SK-N-SH (cell line): ENCODE measurements at regions of chr14 and their contacts with region 1.

Region 1: GRCh38 chr14:66403183-66403582 is 83.0 kb upstream of the CCDC196 start:
- DNase-seq: no peak
- H3K4me3 ChIP-seq: no peak overlapping the region
- H3K27ac ChIP-seq: no peak overlapping the region
- H3K4me1 ChIP-seq: no peaks in the 10 kb centered on the region
- H3K27me3 ChIP-seq: no peaks in the 10 kb centered on the region
- CTCF ChIP-seq: peak; percentile 44
- EP300 ChIP-seq: no peak
- RAD21 ChIP-seq: peak; percentile 47

Region 2: GRCh38 chr14:66293533-66294105 is 109.6 kb before region 1 on chr14:
- CTCF ChIA-PET with region 1: no interaction called
- POLR2A ChIA-PET with region 1: no interaction called
- DNase-seq: no peak
- H3K4me3 ChIP-seq: no peak overlapping the region
- H3K27ac ChIP-seq: no peak overlapping the region
- H3K4me1 ChIP-seq: no peaks in the 10 kb centered on the region
- H3K27me3 ChIP-seq: no peaks in the 10 kb centered on the region
- CTCF ChIP-seq: no peak
- EP300 ChIP-seq: no peak
- RAD21 ChIP-seq: no peak

Region 3: DNA sequence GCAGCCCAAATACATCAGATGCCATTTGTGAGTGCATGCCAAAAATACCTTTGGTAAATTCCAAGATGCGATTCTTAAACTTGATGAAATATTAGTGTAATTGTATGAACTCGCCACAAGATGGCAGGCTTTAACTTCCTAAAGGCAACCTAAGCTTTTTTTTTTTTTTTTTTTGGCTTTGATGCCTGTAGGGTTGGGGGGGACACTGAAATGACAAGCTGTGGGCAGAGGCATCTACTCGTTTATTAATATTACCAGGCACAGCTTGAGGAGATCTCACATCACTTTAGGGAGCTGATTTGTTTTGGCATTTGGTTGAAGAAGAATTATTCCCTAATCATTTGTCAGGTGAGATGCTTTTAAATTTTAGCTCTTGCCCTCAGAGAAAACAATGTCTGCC is 43.7 kb before region 1 on chr14:
- CTCF ChIA-PET with region 1: interaction called, 41 read pairs
- POLR2A ChIA-PET with region 1: no interaction called
- DNase-seq: peak; percentile 45
- H3K4me3 ChIP-seq: no peak overlapping the region; a peak in 1 of 4 replicates
- H3K27ac ChIP-seq: no peak overlapping the region
- H3K4me1 ChIP-seq: peaks cover 0 to 2% of the 10 kb centered on the region in 2 experiments; a peak in 1 of 4 replicates
- H3K27me3 ChIP-seq: no peaks in the 10 kb centered on the region
- CTCF ChIP-seq: peak; percentile 76
- EP300 ChIP-seq: no peak
- RAD21 ChIP-seq: peak; percentile 89

Region 4: GRCh38 chr14:66388516-66388915 is 14.7 kb before region 1 on chr14:
- CTCF ChIA-PET with region 1: interaction called, 23 read pairs
- POLR2A ChIA-PET with region 1: no interaction called
- DNase-seq: no peak
- H3K4me3 ChIP-seq: no peak overlapping the region
- H3K27ac ChIP-seq: no peak overlapping the region
- H3K4me1 ChIP-seq: no peaks in the 10 kb centered on the region
- H3K27me3 ChIP-seq: no peaks in the 10 kb centered on the region
- CTCF ChIP-seq: no peak
- EP300 ChIP-seq: no peak
- RAD21 ChIP-seq: no peak

Region 5: DNA sequence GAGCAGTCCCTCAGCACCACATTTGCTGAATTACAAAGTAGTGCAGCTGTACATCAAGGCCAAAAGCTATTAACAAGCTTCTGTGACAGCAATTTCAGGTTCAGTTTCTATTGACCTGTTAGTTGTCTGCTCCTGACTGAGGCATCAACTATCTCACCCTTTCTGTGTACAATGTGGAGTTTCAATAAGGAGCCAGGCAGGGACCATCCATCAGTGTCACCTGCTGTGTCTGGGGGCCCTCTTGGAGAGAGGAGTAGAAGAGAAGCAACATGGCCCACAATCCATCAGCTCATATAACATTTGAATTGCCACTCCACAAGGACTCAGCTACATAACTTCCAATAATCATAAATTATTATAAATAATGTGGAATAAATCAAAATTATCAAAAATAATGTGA is 10.7 kb after region 1 on chr14:
- CTCF ChIA-PET with region 1: interaction called, 13 read pairs
- POLR2A ChIA-PET with region 1: no interaction called
- DNase-seq: no peak
- H3K4me3 ChIP-seq: no peak overlapping the region
- H3K27ac ChIP-seq: no peak overlapping the region
- H3K4me1 ChIP-seq: no peaks in the 10 kb centered on the region
- H3K27me3 ChIP-seq: no peaks in the 10 kb centered on the region
- CTCF ChIP-seq: no peak
- EP300 ChIP-seq: no peak
- RAD21 ChIP-seq: no peak